BJ (cell line): ENCODE measurements at regions of chr4 and their contacts with region 1.

Region 1: DNA sequence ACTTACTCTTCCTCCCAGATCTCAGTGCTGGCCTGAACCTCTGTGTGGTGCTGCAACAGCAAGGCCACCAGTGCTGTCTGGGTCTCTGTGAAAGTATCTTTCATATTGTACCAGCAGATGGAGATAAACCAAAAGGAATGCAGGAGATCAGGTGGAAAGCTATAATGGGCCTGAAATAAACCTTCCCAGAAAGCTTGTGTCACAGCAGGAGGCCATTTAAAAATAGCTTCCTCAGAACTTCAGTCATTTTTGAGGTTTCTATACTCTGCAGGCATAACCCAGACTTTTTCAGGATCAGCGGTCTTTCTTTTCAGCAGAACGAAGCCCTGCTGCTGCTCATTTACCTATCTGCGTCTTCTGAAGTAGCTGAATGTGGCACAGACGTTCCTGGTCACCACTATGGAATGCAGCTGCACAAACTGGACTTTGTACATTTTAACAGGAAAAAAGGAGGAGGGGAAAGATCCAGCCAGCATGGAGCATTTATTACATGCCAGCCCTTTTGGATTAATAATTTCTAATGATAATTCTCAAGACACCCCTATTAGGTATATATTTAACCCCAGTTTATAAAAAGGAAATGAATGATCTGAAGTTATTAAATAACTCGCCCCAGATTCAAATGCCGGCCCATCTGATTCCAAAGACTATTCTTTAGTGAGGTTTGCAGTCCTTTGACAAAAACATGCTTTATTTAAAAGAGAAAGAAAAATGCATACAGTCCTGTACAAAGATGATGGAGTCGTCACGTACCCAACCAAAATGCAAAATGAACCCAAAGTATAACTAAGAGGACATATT is 119.7 kb downstream of the NFKB1 start:
- DNase-seq: peak; percentile 47
- H3K4me3 ChIP-seq: peak overlapping the region; percentile 1; the same call in 1 of the 2 replicates
- H3K27me3 ChIP-seq: no peaks in the 10 kb centered on the region
- CTCF ChIP-seq: peak; percentile 67

Region 2: DNA sequence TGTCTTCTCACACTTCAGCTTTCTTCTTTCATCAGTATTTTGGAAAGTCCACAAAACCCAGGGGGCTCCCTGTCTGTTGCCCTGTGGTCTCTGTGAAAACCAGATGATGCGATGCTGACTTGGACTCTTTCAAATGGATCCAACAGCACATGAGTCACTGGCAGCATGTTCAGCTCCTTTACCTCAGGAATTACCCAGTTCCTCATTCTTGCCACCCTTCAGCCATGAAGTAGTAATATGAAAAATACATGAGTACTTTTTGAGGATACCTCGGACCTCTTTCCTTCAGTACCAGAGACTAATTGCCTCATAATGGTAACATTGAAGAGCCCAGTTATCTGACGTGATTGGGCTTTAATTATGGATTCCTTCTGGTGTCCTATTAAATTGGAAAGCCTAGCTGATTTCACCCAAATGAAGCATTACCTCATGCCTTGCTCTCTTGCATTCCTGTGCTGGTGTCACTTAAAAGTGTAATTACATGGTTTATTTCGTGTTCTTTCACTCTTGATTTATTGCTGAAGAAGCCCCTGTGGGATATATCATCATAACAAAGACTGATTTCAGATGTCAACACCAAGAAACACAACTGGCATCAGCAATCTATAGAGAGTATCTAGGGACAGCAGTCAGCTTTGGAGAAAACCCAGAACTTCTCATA is 56.4 kb before region 1 on chr4:
- CTCF ChIA-PET with region 1: no interaction called
- POLR2A ChIA-PET with region 1: no interaction called
- DNase-seq: no peak
- H3K4me3 ChIP-seq: no peak overlapping the region
- H3K27me3 ChIP-seq: no peaks in the 10 kb centered on the region
- CTCF ChIP-seq: no peak

Region 3: DNA sequence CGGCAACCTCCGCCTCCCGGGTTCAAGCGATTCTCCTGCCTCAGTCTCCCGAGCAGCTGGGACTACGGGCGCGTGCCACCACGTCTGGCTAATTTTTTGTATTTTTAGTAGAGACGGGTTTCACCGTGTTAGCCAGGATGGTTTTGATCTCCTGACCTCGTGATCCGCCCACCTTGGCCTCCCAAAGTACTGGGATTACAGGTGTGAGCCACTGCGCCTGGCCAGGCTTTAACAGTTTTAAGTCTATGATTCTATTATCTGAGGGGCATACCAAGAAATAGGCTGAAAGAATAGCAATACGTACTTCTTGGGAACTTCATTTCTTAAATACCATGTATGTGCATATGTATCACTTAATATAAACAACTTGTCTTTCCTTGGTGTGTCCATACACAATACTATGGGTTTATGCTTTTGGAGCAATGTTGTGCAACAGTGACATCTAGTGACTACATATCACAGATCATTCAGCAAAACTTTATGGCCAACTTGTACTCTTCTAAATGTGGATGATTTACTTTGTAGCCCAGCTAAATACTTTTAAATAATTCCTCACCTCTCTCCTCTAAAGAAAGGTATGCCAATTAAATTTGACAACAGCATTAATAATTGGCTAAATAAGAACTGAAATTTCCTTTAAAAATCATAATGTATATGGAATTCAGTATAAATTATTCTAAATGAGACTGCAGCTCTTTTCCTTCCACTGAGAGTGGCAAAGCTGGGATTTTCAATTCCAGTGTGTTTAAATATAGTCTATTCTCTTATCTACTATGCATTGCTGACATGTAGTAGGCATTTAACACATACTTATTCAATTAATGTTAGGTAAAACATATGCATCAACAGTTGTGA is 388.2 kb after region 1 on chr4:
- CTCF ChIA-PET with region 1: interaction called, 35 read pairs
- POLR2A ChIA-PET with region 1: no interaction called
- DNase-seq: peak; percentile 20
- H3K4me3 ChIP-seq: no peak overlapping the region
- H3K27me3 ChIP-seq: no peaks in the 10 kb centered on the region
- CTCF ChIP-seq: peak; percentile 65

Region 4: GRCh38 chr4:103091601-103092223 is 470.8 kb after region 1 on chr4:
- CTCF ChIA-PET with region 1: interaction called, 24 read pairs
- POLR2A ChIA-PET with region 1: no interaction called
- DNase-seq: no peak
- H3K4me3 ChIP-seq: no peak overlapping the region
- H3K27me3 ChIP-seq: no peaks in the 10 kb centered on the region
- CTCF ChIP-seq: peak; percentile 60

Region 5: GRCh38 chr4:103099691-103100392 is 478.9 kb after region 1 on chr4 and contains the start of gene BDH2:
- CTCF ChIA-PET with region 1: interaction called, 10 read pairs
- POLR2A ChIA-PET with region 1: no interaction called
- DNase-seq: peak; percentile 82
- H3K4me3 ChIP-seq: peak within 1 kb of the TSS; percentile 46
- H3K27me3 ChIP-seq: no peaks in the 10 kb centered on the region
- CTCF ChIP-seq: peak; percentile 63
- polyA plus RNA-seq, gene BDH2: 41.6 and 67.5 TPM in 2 replicates